ENCODE measurements at regions of chr22 and their contacts with region 1.

Region 1: GRCh38 chr22:23385291-23386244 is 194.5 kb downstream of the IGLL1 start:
- DNase-seq: peak; percentile 72 to 88
- H3K4me3 ChIP-seq: no peak overlapping the region
- H3K27ac ChIP-seq: no peak overlapping the region
- H3K4me1 ChIP-seq: peaks cover 0 to 10% (median 9%) of the 10 kb centered on the region in 4 donors
- H3K27me3 ChIP-seq: peaks cover 0 to 27% of the 10 kb centered on the region in 2 donors
- CTCF ChIP-seq: peak; percentile 97 to 99

Region 2: GRCh38 chr22:22959147-22959827 is 426.3 kb before region 1 on chr22:
- intact Hi-C with region 1: loop called (anchors 10 kb)
- DNase-seq: peak in 1 of 2 donors; percentile 51
- H3K4me3 ChIP-seq: no peak overlapping the region
- H3K27ac ChIP-seq: no peak overlapping the region
- H3K4me1 ChIP-seq: no peaks in the 10 kb centered on the region
- H3K27me3 ChIP-seq: peaks cover 0 to 30% of the 10 kb centered on the region in 2 donors
- CTCF ChIP-seq: peak; percentile 67 to 79

Region 3: GRCh38 chr22:23178512-23179254 is 206.9 kb before region 1 on chr22:
- intact Hi-C with region 1: loop called (anchors 5 kb)
- DNase-seq: peak in 1 of 2 donors; percentile 81
- H3K4me3 ChIP-seq: no peak overlapping the region
- H3K27ac ChIP-seq: peak overlapping the region; percentile 94 to 96
- H3K4me1 ChIP-seq: peaks cover 0 to 50% (median 38%) of the 10 kb centered on the region in 4 donors
- H3K27me3 ChIP-seq: no peaks in the 10 kb centered on the region
- CTCF ChIP-seq: peak; percentile 98

Region 4: DNA sequence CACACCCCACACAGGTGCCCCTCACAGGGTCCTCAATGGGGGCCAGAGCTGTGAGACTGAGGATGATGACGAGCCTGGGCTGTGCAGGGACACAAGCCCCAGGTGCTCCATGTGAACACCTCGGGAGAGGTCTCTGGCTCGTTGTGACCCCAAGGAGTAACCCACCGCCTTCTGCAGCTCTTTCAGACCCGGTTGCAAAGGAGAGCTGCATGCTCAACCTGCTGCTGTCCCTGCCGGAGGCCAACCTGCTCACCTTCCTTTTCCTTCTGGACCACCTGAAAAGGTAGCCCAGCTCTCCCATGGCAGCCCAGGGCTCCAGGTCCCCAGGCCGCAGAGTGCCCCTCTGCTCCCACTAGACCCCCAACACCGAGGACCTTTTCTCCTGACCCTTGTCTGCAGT is 71.8 kb before region 1 on chr22:
- intact Hi-C with region 1: loop called (anchors 5 kb)
- DNase-seq: no peak
- H3K4me3 ChIP-seq: no peak overlapping the region
- H3K27ac ChIP-seq: no peak overlapping the region
- H3K4me1 ChIP-seq: peaks cover 0 to 9% (median 0%) of the 10 kb centered on the region in 4 donors
- H3K27me3 ChIP-seq: no peaks in the 10 kb centered on the region
- CTCF ChIP-seq: no peak

Region 5: DNA sequence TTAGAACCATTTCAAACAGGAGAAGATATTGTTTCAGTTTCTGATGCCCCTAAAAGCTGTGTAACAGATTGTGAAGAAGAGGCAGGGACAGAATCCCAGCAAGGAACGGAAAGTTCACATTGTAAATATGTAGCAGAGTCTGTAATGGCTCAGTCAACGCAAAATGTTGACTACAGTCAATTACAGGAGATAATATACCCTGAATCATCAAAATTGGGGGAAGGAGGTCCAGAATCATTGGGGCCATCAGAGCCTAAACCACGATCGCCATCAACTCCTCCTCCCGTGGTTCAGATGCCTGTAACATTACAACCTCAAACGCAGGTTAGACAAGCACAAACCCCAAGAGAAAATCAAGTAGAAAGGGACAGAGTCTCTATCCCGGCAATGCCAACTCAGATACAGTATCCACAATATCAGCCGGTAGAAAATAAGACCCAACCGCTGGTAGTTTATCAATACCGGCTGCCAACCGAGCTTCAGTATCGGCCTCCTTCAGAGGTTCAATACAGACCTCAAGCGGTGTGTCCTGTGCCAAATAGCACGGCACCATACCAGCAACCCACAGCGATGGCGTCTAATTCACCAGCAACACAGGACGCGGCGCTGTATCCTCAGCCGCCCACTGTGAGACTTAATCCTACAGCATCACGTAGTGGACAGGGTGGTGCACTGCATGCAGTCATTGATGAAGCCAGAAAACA is 153.7 kb after region 1 on chr22:
- intact Hi-C with region 1: loop called (anchors 10 kb)
- DNase-seq: peak; percentile 85 to 86
- H3K4me3 ChIP-seq: no peak overlapping the region
- H3K27ac ChIP-seq: no peak overlapping the region
- H3K4me1 ChIP-seq: peaks cover 0 to 8% (median 2%) of the 10 kb centered on the region in 4 donors
- H3K27me3 ChIP-seq: peaks cover 0 to 2% of the 10 kb centered on the region in 2 donors
- CTCF ChIP-seq: peak; percentile 84 to 94

Region 6: DNA sequence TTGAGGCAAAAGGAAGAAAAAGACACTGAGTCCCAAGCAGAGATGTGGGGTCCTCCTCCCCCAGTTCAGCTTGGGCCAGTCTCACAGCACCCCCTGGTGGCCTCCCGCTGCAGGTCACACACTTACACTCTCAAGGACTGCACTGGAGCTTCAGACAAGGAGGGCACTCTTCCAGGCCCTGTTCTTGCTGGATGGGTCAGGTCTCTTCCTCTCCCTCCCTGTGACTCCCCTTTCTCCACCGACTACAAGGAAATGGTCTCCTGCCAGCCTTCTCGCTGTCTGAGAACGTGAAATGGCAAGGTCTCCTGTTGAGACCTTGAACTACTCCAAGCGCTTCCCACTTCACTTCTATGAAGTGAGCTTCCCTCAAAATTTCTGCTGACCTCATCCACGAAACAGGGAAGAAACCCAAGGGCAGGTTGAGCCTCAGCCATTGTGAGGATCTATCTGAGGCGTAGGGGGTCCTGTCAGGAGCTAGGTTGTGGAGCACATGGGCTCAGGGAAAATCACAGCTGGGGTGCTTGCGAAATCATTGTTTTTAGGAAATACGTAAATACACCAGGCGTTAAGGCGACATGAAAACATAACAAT is 205.7 kb after region 1 on chr22:
- intact Hi-C with region 1: no loop called
- DNase-seq: peak in 1 of 2 donors; percentile 40
- H3K4me3 ChIP-seq: no peak overlapping the region
- H3K27ac ChIP-seq: no peak overlapping the region
- H3K4me1 ChIP-seq: no peaks in the 10 kb centered on the region
- H3K27me3 ChIP-seq: no peaks in the 10 kb centered on the region
- CTCF ChIP-seq: peak; percentile 33 to 52

Measured in tibial artery (tissue), 4 donors.